Sigmoid colon (tissue), 7 donors: ENCODE measurements at regions of chr5 and their contacts with region 1.

Region 1: DNA sequence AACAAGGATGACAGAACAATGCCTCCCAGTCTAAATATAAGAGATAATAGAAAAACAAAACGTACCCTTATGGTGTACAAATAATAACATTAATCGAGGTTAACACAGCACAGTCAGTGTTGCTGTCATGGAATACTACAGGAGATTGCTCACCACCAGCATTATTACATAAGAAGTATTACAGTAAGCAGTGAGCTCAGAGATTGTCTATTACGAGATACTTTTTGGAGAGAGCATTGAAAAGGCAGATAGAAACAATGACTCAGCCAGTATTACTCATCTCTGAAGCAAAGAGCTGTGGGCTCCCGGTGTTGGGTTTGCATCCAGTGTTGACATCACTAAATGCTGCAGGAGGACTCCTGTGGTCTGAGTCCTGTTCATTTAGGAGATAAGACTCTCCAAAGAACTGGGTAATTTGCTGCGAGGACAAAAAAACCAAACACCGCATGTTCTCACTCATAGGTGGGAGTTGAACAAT is 191.9 kb upstream of the SEMA6A start:
- DNase-seq: peak; percentile 77
- H3K4me3 ChIP-seq: no peak overlapping the region
- H3K27ac ChIP-seq: peak overlapping the region in 1 of 4 donors; percentile 12
- H3K4me1 ChIP-seq: no peaks in the 10 kb centered on the region
- H3K27me3 ChIP-seq: no peaks in the 10 kb centered on the region
- CTCF ChIP-seq: no peak
- EP300 ChIP-seq: no peak
- POLR2A ChIP-seq: no peak

Region 2: DNA sequence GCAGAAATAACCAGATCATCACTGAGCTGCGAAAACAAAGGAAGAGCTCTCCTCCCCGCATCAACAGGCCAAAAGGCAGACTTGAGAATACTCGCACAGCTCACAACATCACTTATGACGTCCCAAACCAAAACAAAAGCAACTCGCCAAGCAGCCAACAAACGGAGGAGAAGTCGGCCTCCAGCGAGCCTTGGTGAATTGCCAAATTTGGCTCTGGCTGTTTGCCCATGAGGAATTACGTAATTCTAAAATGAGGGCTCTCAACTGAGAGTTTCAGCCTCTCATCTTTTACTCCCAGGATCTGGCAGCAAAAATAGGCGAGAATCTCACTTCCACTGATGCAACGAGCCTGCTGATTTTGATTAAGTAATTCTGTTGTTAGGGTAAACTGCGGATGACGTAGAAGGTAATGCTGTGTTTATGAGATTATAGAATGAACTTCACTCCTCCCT is 140.2 kb before region 1 on chr5:
- intact Hi-C with region 1: loop called (anchors 10 kb)
- DNase-seq: peak; percentile 92
- H3K4me3 ChIP-seq: peak overlapping the region in 3 of 4 donors; percentile 14 to 28 (median 28)
- H3K27ac ChIP-seq: peak overlapping the region; percentile 53 to 73 (median 70)
- H3K4me1 ChIP-seq: peaks cover 0 to 18% (median 11%) of the 10 kb centered on the region in 4 donors
- H3K27me3 ChIP-seq: no peaks in the 10 kb centered on the region
- CTCF ChIP-seq: no peak
- EP300 ChIP-seq: peak in 1 of 4 donors; percentile 14
- POLR2A ChIP-seq: no peak